ENCODE measurements at regions of chr3 and their contacts with region 1.

Region 1: DNA sequence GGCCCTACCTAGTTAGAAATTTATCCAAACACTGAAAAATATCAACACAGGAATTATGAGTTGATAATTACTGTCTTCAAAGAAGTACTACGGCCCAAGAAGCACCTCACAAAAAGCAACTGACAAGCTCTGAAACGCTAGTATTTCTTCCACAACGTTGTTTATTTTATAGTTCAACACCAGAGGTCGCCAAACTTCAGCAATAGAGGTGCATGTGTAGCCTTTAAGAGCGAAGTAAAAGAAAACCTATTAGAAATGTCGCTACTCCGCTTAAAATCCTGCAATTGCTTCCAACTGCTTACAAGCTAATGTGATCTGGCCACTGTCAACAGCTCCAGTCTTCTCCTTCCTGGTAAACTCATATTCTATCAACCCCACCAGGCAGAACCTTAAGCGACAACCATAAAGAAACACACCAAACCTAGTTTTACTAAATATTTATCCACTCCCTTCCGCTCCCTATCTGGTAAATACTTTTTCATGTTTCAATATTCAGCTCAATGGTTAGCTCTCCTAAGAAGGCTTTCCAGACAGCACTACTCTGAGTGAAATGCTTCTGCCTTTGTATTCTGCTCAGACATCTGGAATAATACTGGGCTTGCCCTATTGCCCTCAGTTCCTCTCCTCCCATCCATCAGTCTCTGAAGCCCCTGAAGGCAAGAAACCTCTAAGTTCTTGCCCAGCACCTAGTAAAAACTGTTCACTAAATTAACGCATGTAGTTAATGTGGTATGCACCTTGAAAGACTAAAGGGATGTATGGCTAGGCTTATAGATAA is 110.2 kb downstream of the NR1I2 start:
- DNase-seq: peak; percentile 35
- H3K4me3 Mint-ChIP-seq: no peak overlapping the region
- H3K27ac Mint-ChIP-seq: no peak overlapping the region
- H3K4me1 Mint-ChIP-seq: peaks cover 10% of the 10 kb centered on the region
- H3K27me3 Mint-ChIP-seq: no peaks in the 10 kb centered on the region

Region 2: GRCh38 chr3:119918992-119919933 is 27.1 kb after region 1 on chr3:
- intact Hi-C with region 1: no loop called
- DNase-seq: no peak
- H3K4me3 Mint-ChIP-seq: no peak overlapping the region
- H3K27ac Mint-ChIP-seq: no peak overlapping the region
- H3K4me1 Mint-ChIP-seq: peaks cover 10% of the 10 kb centered on the region
- H3K27me3 Mint-ChIP-seq: no peaks in the 10 kb centered on the region

Region 3: DNA sequence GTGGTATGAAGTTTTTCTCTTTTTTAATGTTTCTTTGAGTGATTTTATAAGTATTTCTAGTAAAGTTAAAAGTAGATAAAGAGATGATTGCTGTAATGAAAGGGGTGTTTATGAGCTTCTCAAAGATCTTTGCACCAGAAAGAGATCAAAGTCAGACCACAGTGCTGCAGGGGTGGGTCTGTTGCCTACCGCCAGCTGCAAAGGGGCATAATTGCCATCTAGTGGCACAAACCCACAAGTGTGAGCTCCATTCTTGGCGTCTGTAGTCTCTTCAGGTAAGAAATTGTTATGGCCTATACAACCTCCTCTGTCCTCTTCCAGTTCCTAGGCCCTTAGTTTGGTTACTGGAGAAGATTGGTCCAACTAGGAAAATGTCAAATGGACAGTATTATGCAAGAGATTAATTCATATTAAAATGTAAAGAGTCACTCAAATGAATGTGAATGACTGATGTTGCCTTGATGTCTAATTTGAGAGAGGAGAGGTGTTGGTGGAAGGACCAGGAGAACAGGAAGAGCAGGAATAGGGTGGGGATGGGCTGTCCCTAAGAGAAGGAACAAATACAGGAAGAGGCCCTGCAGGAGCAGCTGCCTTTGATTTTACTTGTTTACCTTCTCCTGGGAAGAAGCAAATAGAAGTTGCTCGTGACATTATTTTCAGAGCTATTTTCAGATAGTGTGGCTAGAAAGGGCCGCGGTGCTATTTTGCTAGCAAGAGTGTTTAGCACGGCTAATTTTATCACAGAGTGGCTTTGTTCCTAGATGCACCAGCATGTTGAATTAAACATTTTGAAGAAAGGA is 255.1 kb after region 1 on chr3:
- intact Hi-C with region 1: loop called (anchors 1 kb)
- DNase-seq: no peak
- H3K4me3 Mint-ChIP-seq: no peak overlapping the region
- H3K27ac Mint-ChIP-seq: no peak overlapping the region
- H3K4me1 Mint-ChIP-seq: peaks cover 11% of the 10 kb centered on the region
- H3K27me3 Mint-ChIP-seq: no peaks in the 10 kb centered on the region

Region 4: GRCh38 chr3:120182724-120183524 is 290.8 kb after region 1 on chr3:
- intact Hi-C with region 1: loop called (anchors 1 kb)
- DNase-seq: no peak
- H3K4me3 Mint-ChIP-seq: no peak overlapping the region
- H3K27ac Mint-ChIP-seq: no peak overlapping the region
- H3K4me1 Mint-ChIP-seq: no peaks in the 10 kb centered on the region
- H3K27me3 Mint-ChIP-seq: peaks cover 6% of the 10 kb centered on the region

Region 5: GRCh38 chr3:120198305-120198878 is 306.3 kb after region 1 on chr3:
- intact Hi-C with region 1: loop called (anchors 1 kb)
- DNase-seq: no peak
- H3K4me3 Mint-ChIP-seq: no peak overlapping the region
- H3K27ac Mint-ChIP-seq: no peak overlapping the region
- H3K4me1 Mint-ChIP-seq: no peaks in the 10 kb centered on the region
- H3K27me3 Mint-ChIP-seq: peaks cover 2% of the 10 kb centered on the region

Measured in activated T-helper 1 cell treated with anti-CD3 and anti-CD28 coated beads, Interleukin-12 subunit alpha, Interleukin-12 subunit beta, Interleukin-2, Interleukin-4 antibody, amounts not matched to agents 30 ng/mL and 10 ng/mL and 1 ng/mL, durations not matched to agents 14 hours and 24 hours and 36 hours (primary cell).